Calu3 (cell line): ENCODE measurements at regions of chr5 and their contacts with region 1.

Region 1: DNA sequence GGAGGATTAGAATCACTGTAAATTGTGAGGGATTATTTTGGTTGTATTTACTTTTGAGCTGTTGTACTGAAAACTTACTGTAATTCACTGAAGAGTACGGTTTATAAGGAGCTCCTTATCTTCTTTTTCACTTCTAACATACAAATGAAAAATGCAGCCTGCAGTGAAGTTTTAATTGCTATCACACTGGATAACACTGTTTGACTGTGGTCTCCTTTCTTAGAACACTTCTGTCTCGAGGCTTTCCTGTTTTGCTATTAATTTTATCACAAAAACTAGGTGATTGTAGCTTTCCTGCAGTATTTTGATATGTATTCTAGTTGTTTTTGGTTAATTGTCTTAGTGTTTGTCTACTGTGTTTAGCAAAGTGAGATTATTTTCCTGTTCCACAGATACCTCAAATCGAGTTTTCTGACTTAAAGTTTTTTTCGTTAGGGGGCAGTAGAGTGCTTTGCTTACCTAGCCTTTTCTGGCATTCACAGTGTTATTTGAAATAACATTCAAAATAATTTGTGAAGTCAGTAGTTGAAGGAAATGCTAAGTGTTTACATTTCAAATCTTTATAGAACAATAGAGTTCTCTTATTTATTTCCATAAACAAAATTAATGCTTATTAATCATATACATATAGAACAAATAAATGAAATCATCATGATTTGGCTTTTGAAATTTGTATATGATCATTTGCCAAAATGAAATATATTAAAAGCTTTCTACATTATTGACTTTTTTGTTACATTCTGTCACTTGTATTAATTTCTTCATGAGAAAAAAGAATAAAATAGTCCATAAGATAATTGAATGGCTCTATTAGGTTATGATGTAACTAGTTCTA is 52.9 kb downstream of the COMMD10 start:
- DNase-seq: peak; percentile 36
- H3K4me3 Mint-ChIP-seq: no peak overlapping the region
- H3K27ac Mint-ChIP-seq: no peak overlapping the region
- H3K4me1 Mint-ChIP-seq: no peaks in the 10 kb centered on the region
- H3K27me3 Mint-ChIP-seq: no peaks in the 10 kb centered on the region
- CTCF ChIP-seq: peak; percentile 70

Region 2: GRCh38 chr5:116273448-116274207 is 135.9 kb after region 1 on chr5:
- CTCF ChIA-PET with region 1: no interaction called
- intact Hi-C with region 1: loop called (anchors 5 kb)
- DNase-seq: no peak
- H3K4me3 Mint-ChIP-seq: no peak overlapping the region
- H3K27ac Mint-ChIP-seq: no peak overlapping the region
- H3K4me1 Mint-ChIP-seq: peaks cover 12% of the 10 kb centered on the region
- H3K27me3 Mint-ChIP-seq: no peaks in the 10 kb centered on the region
- CTCF ChIP-seq: no peak

Region 3: DNA sequence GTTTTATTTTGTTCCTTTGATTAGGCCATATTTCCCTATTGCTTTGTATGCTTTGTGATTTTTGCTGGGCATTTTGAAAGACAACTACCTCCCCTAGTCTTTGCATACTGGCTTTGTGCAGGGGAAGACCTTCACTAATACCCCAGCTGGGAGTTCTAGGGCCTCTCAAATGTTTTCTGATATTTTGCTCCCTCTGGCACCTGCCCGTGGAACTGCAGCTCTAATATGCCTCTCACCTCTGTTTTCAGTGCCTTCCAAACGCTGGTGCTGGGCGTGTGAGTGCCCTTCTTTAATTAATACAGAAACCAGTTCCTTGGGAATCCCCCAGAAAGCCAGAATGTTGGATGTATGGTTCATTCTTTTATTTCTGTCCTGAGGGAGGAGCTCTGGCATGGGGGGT is 151.5 kb after region 1 on chr5:
- CTCF ChIA-PET with region 1: no interaction called
- intact Hi-C with region 1: loop called (anchors 2 kb)
- DNase-seq: peak; percentile 15
- H3K4me3 Mint-ChIP-seq: no peak overlapping the region
- H3K27ac Mint-ChIP-seq: no peak overlapping the region
- H3K4me1 Mint-ChIP-seq: peaks cover 9% of the 10 kb centered on the region
- H3K27me3 Mint-ChIP-seq: no peaks in the 10 kb centered on the region
- CTCF ChIP-seq: peak; percentile 39

Region 4: DNA sequence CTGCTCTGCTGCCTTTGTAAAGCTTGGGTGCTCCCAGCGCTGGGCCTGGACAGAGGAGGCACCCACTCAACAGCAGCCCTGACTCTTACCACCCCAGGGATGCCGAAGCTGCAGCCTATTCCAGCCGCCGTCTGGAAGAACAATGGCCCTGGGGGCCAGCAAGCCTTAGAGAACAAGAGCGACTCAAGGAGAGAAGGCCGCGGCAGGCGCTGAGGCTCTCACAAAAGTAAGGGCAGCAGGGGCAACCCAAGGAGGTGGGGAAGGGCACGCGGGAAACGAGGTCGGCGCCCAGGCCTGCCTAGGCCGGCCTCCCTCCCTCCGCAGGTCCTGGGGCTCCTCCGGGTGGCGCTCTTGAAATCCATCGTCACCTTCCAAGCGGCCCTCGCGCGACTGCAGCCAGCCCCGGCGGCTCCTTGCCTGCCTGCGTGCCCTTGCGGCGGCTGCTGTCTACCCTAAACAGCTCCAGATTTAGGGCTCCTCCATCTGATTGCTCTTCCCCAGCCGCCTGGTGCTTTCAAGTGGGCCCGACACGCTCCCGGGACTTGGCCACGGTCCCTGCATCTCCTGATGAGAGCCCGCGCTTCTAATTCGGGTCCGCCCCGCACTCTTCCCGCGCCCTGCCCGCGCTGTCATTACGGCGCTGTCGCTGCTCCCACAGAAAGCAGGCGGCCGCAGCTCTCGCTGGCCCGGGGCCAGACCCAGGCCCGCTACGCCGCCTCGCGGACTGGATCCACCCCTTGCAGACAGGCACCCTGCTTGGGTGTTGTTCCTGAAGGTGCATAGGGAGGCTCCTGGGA is 223.6 kb after region 1 on chr5:
- CTCF ChIA-PET with region 1: interaction called, 3 read pairs
- intact Hi-C with region 1: loop called (anchors 5 kb)
- DNase-seq: peak; percentile 78
- H3K4me3 Mint-ChIP-seq: peak overlapping the region; percentile 94
- H3K27ac Mint-ChIP-seq: peak overlapping the region; percentile 30
- H3K4me1 Mint-ChIP-seq: peaks cover 10% of the 10 kb centered on the region
- H3K27me3 Mint-ChIP-seq: no peaks in the 10 kb centered on the region
- CTCF ChIP-seq: no peak

Region 5: GRCh38 chr5:116454417-116454927 is 316.7 kb after region 1 on chr5:
- CTCF ChIA-PET with region 1: no interaction called
- intact Hi-C with region 1: loop called (anchors 10 kb)
- DNase-seq: no peak
- H3K4me3 Mint-ChIP-seq: no peak overlapping the region
- H3K27ac Mint-ChIP-seq: peak overlapping the region; percentile 21
- H3K4me1 Mint-ChIP-seq: peaks cover 42% of the 10 kb centered on the region
- H3K27me3 Mint-ChIP-seq: no peaks in the 10 kb centered on the region
- CTCF ChIP-seq: no peak

Region 6: GRCh38 chr5:116557669-116558271 is 420.0 kb after region 1 on chr5:
- CTCF ChIA-PET with region 1: no interaction called
- intact Hi-C with region 1: loop called (anchors 5 kb)
- DNase-seq: peak; percentile 26
- H3K4me3 Mint-ChIP-seq: no peak overlapping the region
- H3K27ac Mint-ChIP-seq: no peak overlapping the region
- H3K4me1 Mint-ChIP-seq: peaks cover 16% of the 10 kb centered on the region
- H3K27me3 Mint-ChIP-seq: no peaks in the 10 kb centered on the region
- CTCF ChIP-seq: peak; percentile 71

Region 7: DNA sequence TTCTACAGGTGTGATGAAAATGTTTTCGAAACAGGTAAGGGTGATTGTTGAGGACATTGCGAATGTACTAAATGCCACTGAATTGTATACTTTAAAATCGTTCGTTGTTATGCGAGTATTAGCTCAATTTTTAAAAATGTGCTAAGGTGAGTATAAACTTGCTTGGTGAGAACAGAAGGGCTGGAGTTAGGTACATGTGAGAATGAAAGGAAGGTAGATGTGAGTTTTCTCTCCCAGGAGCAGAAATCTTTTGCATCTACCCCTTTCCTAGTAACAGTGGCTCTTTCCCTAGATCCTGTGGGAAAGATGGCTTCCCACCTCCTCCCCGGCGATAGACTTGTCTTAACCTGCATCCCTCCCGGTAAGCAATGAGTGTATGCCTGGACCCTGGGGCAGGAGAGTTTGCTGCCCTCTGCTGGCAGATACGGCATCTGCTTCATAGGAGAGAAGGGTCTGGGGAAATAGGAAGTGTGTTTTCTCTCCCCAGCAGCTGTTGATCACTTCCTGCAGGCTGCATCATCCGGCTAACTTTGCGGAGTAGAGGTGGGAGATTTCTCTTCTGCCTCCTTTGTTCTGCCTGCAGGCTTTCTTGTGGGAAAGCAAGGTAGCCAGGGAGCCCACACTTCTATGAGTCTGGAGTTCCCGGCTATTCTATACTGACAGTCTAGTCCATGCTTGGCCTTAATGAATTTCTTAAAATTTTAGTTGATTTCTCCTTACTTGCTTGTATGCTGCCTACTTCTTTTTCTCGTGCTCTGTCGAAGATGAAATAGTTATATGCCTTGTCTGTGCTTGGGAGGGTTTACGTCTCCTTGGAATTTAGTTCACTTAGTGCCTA is 810.1 kb after region 1 on chr5:
- CTCF ChIA-PET with region 1: no interaction called
- intact Hi-C with region 1: loop called (anchors 2 kb)
- DNase-seq: peak; percentile 87
- H3K4me3 Mint-ChIP-seq: no peak overlapping the region
- H3K27ac Mint-ChIP-seq: no peak overlapping the region
- H3K4me1 Mint-ChIP-seq: peaks cover 18% of the 10 kb centered on the region
- H3K27me3 Mint-ChIP-seq: no peaks in the 10 kb centered on the region
- CTCF ChIP-seq: peak; percentile 83